Heart left ventricle (tissue), 16 donors: ENCODE measurements at regions of chr6 and their contacts with region 1.

Region 1: DNA sequence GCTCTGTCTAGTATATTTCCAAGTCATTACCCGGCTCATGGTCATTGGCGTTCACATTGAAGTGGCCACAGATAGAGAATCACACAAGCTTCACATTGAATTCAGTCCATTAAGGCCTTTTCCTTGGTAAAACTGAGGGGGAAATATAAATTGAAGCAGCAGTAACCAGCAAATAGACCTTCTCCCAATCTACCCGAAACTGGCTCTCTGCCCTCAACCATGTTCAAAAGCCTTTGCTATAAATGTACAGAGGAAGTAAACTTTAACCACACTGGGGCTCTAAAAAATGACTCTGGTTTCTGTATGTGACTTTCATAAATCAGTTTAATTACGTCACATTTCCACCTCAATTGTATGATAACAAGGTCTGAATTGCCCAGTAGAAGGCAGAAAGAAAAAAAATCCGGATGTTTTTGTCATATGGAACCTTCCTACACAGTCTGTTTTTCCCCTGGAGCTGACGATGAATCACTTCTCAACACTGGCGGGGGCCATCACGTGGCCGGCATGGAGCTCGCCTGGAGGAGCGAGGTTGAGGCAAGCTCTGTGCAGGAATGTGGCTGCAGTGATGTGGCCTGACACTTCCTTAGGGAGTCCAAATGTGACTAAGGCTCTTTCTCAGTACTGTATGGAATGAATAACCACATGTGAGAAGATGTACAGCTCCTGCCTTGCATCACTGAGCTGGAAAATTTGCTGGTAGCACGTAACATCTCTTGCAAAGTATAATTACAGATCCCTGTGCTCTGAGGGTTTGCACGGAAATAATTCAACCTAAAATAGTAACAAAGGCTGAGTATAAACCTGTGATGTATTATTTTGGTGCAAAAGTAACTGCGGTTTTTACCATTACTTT is 58.6 kb upstream of the SNX9 start:
- DNase-seq: peak; percentile 78 to 88 (median 80)
- ATAC-seq: peak; percentile 71 to 93 (median 87)
- H3K4me3 ChIP-seq: peak overlapping the region in 2 of 12 donors; percentile 12 to 13
- H3K27ac ChIP-seq: peak overlapping the region in 11 of 12 donors; percentile 5 to 90 (median 34)
- H3K4me1 ChIP-seq: peaks cover 8 to 92% (median 27%) of the 10 kb centered on the region in 12 donors
- H3K27me3 ChIP-seq: no peaks in the 10 kb centered on the region
- CTCF ChIP-seq: no peak
- POLR2A ChIP-seq: no peak

Region 2: GRCh38 chr6:157814883-157815282 is 50.5 kb after region 1 on chr6:
- intact Hi-C with region 1: loop called in 7 of 10 experiments (anchors 5 to 10 kb)
- DNase-seq: no peak
- ATAC-seq: no peak
- H3K4me3 ChIP-seq: no peak overlapping the region
- H3K27ac ChIP-seq: peak overlapping the region in 10 of 12 donors; percentile 7 to 91 (median 66)
- H3K4me1 ChIP-seq: peaks cover 0 to 30% (median 13%) of the 10 kb centered on the region in 12 donors
- H3K27me3 ChIP-seq: no peaks in the 10 kb centered on the region
- CTCF ChIP-seq: no peak
- POLR2A ChIP-seq: no peak

Region 3: GRCh38 chr6:157823001-157823527 is 58.7 kb after region 1 on chr6 and contains the start of gene SNX9:
- intact Hi-C with region 1: loop called in 8 of 10 experiments (anchors 2 to 10 kb)
- DNase-seq: peak; percentile 85 to 92 (median 87)
- ATAC-seq: peak; percentile 77 to 96 (median 90)
- H3K4me3 ChIP-seq: peak within 1 kb of the TSS; percentile 74 to 99 (median 94)
- H3K27ac ChIP-seq: peak within 1 kb of the TSS; percentile 92 to 98 (median 96)
- H3K4me1 ChIP-seq: peaks cover 0 to 41% (median 22%) of the 10 kb centered on the region in 12 donors
- H3K27me3 ChIP-seq: no peaks in the 10 kb centered on the region
- CTCF ChIP-seq: peak in 1 of 12 donors; percentile 11
- POLR2A ChIP-seq: peak in 1 of 2 donors; percentile 60
- total RNA-seq, gene SNX9: 27.6 to 44.0 (median 32.7) TPM

Region 4: GRCh38 chr6:158060455-158061360 is 296.3 kb after region 1 on chr6:
- intact Hi-C with region 1: loop called in 2 of 10 experiments (anchors 5 to 10 kb)
- DNase-seq: peak; percentile 78 to 91 (median 88)
- ATAC-seq: peak; percentile 73 to 87 (median 84)
- H3K4me3 ChIP-seq: peak overlapping the region in 4 of 12 donors; percentile 2 to 27 (median 8)
- H3K27ac ChIP-seq: peak overlapping the region; percentile 14 to 94 (median 79)
- H3K4me1 ChIP-seq: peaks cover 12 to 51% (median 24%) of the 10 kb centered on the region in 12 donors
- H3K27me3 ChIP-seq: no peaks in the 10 kb centered on the region
- CTCF ChIP-seq: no peak
- POLR2A ChIP-seq: no peak